ENCODE measurements at regions of chr21 and their contacts with region 1.

Region 1: GRCh38 chr21:37372127-37372731 is 5.7 kb downstream of the DYRK1A start:
- DNase-seq: no peak
- H3K4me3 ChIP-seq: no peak overlapping the region
- H3K27me3 ChIP-seq: no peaks in the 10 kb centered on the region
- CTCF ChIP-seq: no peak

Region 2: DNA sequence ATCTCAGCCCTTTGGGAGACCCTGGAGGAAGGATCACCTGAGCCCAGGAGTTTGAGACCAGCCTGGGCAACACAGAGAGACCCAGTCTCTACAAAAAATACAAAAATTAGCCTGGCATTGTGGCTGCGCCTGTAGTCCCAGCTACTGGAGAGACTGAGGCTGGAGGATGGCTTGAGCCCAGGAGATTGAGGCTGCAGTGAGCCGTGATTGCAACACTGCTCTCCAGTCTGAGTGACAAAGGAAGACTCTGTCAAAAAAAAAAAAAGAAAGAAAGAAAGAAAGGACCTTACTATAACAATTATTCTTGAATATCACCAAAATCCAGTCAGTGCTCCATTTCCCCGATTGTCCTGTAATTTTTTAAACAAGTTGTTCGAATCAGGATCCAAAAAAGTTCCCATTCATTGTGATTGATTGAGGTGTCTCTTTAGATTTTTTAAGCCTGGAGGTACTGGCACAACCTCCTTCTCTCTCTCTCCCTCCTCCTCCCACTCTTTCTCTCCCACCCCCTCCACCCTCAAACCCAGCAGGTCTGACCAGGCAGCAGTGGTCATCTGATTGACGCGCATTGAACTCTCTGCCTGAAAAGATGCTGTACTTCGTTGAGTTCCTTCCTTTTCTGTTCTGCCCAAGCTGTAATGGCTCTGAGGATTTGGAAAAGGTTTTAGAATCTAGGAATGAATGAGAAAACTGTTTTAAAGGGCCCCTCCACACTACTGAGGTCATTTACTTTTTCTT is 31.2 kb before region 1 on chr21:
- CTCF ChIA-PET with region 1: no interaction called
- POLR2A ChIA-PET with region 1: interaction called, 15 read pairs
- DNase-seq: no peak
- H3K4me3 ChIP-seq: no peak overlapping the region
- H3K27me3 ChIP-seq: no peaks in the 10 kb centered on the region
- CTCF ChIP-seq: no peak